Naive thymus-derived CD4-positive, alpha-beta T cell (primary cell): ENCODE measurements at regions of chr10 and their contacts with region 1.

Region 1: DNA sequence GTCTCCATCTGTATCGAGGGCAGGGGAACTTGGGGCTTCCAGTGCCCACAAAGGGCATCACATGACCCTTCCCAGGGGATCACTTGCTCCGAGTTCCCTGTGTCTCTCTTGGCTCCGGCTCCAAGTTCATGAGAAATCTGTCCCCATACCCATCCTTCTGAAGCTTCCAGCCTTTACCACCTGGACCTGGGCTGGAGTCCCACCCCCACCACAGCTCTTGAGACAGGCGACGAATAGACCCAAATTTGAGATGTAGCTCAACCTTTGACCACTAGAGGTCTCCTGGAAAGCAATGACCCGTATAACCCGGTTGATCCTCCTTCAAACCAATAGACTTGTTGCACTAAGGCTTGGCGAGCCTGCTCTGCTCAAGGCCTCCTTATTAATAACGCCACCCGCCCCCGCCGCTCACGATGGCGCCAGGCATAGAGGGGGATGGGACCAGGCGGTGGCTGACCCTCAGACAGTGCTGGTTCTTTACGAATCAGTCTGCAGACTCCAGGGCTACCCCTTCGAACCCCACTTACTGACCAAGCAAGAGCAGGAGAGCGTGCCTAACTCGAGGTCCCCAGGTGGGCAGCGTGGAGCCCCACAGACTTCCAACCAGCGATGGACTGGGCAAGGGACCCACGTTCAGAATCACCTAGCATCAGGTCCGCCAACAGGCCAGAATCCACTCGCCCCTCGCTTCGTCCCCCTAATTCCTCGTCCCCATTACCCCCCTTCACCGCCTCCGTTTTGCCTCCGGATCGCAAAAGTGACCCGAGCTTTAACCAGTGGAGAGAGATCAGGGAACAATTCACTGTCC is 4.4 kb upstream of the ARID5B start:
- DNase-seq: peak; percentile 20 to 76 (median 66)
- ATAC-seq: peak; percentile 80
- H3K4me3 ChIP-seq: peak overlapping the region; percentile 51
- H3K4me3 Mint-ChIP-seq: peak overlapping the region; percentile 77 to 98 (median 86)
- H3K27ac ChIP-seq: no peak overlapping the region
- H3K27ac Mint-ChIP-seq: peak overlapping the region; percentile 46 to 99 (median 86)
- H3K4me1 ChIP-seq: peaks cover 18 to 27% of the 10 kb centered on the region in 2 donors
- H3K4me1 Mint-ChIP-seq: peaks cover 12 to 35% (median 33%) of the 10 kb centered on the region in 7 donors
- H3K27me3 ChIP-seq: no peaks in the 10 kb centered on the region
- H3K27me3 Mint-ChIP-seq: no peaks in the 10 kb centered on the region

Region 2: GRCh38 chr10:61869774-61870525 is 27.1 kb before region 1 on chr10:
- CTCF ChIA-PET with region 1: interaction called, 5 read pairs
- POLR2A ChIA-PET with region 1: interaction called, 13 read pairs
- intact Hi-C with region 1: loop called in 1 of 2 experiments (anchors 1 kb)
- DNase-seq: no peak
- ATAC-seq: no peak
- H3K4me3 ChIP-seq: no peak overlapping the region
- H3K4me3 Mint-ChIP-seq: no peak overlapping the region
- H3K27ac ChIP-seq: no peak overlapping the region
- H3K27ac Mint-ChIP-seq: no peak overlapping the region
- H3K4me1 ChIP-seq: no peaks in the 10 kb centered on the region
- H3K4me1 Mint-ChIP-seq: peaks cover 0 to 10% (median 4%) of the 10 kb centered on the region in 7 donors
- H3K27me3 ChIP-seq: peaks cover 0 to 3% of the 10 kb centered on the region in 2 donors
- H3K27me3 Mint-ChIP-seq: peaks cover 0 to 15% (median 3%) of the 10 kb centered on the region in 5 donors

Region 3: DNA sequence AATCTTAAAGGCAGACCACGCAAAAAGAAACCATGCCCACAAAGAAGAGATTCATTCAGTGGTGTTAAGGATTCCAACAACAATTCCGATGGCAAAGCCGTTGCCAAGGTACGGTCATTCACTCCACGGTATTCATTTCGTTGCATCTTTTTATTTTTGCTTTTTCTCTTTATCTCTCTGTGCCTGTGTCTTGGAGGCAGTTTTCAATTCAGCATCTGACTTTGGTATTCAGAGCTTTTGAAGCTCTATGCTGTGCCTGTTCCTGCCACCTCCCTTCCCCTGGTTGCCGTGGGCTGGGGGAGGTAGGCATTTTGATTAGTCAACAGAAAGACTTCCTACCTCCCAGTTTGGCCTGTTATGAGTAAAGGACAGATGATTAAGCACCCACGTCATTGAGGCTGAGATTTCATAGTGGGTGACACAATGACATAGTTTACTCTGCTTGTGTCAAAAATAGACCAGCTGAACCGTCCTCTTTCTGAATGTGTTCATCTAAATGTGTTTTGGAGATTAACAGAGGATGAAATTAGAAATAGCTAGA is 153.9 kb after region 1 on chr10:
- CTCF ChIA-PET with region 1: interaction called, 17 read pairs
- POLR2A ChIA-PET with region 1: interaction called, 86 read pairs
- intact Hi-C with region 1: loop called (anchors 1 kb)
- DNase-seq: peak; percentile 25 to 88 (median 78)
- ATAC-seq: peak; percentile 86
- H3K4me3 ChIP-seq: peak overlapping the region; percentile 62
- H3K4me3 Mint-ChIP-seq: peak overlapping the region; percentile 81 to 94 (median 88)
- H3K27ac ChIP-seq: peak overlapping the region; percentile 77
- H3K27ac Mint-ChIP-seq: peak overlapping the region; percentile 91 to 100 (median 96)
- H3K4me1 ChIP-seq: peaks cover 59 to 63% of the 10 kb centered on the region in 2 donors
- H3K4me1 Mint-ChIP-seq: peaks cover 60 to 99% (median 96%) of the 10 kb centered on the region in 7 donors
- H3K27me3 ChIP-seq: no peaks in the 10 kb centered on the region
- H3K27me3 Mint-ChIP-seq: no peaks in the 10 kb centered on the region

Region 4: GRCh38 chr10:62244780-62245467 is 347.9 kb after region 1 on chr10:
- CTCF ChIA-PET with region 1: interaction called, 37 read pairs
- POLR2A ChIA-PET with region 1: interaction called, 6 read pairs
- intact Hi-C with region 1: loop called (anchors 1 kb)
- DNase-seq: peak in 8 of 9 donors; percentile 35 to 80 (median 68)
- ATAC-seq: peak; percentile 94
- H3K4me3 ChIP-seq: no peak overlapping the region
- H3K4me3 Mint-ChIP-seq: peak overlapping the region in 6 of 10 donors; percentile 16 to 64 (median 42)
- H3K27ac ChIP-seq: no peak overlapping the region
- H3K27ac Mint-ChIP-seq: peak overlapping the region in 8 of 9 donors; percentile 6 to 85 (median 53)
- H3K4me1 ChIP-seq: peaks cover 6 to 9% of the 10 kb centered on the region in 2 donors
- H3K4me1 Mint-ChIP-seq: peaks cover 9 to 37% (median 30%) of the 10 kb centered on the region in 7 donors
- H3K27me3 ChIP-seq: no peaks in the 10 kb centered on the region
- H3K27me3 Mint-ChIP-seq: no peaks in the 10 kb centered on the region

Region 5: DNA sequence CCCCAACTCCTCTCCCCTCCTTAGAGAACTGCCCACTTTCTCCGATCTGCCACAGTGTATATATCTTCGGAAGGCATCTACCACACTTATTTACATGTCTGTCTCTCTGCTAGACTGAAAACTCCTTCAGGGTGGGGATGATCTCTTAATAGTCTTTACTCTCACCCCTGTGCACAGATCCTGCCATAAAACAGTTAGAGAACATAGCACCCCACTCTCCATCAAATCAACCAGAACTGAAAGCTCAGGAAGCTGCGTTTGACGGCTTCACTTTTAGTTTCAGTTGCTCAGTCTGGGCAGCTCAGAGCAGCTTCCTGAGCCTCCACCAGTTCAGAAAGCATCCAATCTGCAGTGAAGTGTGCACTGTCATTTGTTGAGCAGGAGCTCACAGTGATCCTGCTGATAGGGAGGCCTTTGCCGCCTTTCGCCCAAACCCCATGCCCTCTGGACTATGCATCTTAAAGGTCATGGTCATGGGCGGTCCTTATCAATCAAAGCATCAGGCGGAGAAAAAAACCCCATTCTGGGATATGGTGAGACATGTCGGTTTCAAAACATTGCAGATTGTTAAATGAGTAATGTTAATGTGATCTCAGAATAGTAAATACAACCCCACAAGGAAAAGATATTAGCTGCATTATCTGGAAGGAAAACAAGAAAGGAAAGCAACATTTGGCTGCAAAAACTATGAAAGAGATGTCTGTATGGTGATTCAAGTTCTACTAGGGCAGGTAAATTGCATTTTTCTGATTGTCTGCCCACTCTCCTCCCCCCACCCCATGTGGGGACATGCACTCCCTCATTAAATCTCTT is 740.4 kb after region 1 on chr10:
- CTCF ChIA-PET with region 1: no interaction called
- POLR2A ChIA-PET with region 1: interaction called, 3 read pairs
- intact Hi-C with region 1: loop called (anchors 2 to 5 kb)
- DNase-seq: peak; percentile 32 to 82 (median 75)
- ATAC-seq: peak; percentile 86
- H3K4me3 ChIP-seq: peak overlapping the region; percentile 67
- H3K4me3 Mint-ChIP-seq: no peak overlapping the region
- H3K27ac ChIP-seq: peak overlapping the region; percentile 70
- H3K27ac Mint-ChIP-seq: no peak overlapping the region
- H3K4me1 ChIP-seq: peaks cover 18 to 41% of the 10 kb centered on the region in 2 donors
- H3K4me1 Mint-ChIP-seq: peaks cover 2 to 38% (median 6%) of the 10 kb centered on the region in 7 donors
- H3K27me3 ChIP-seq: no peaks in the 10 kb centered on the region
- H3K27me3 Mint-ChIP-seq: no peaks in the 10 kb centered on the region